CD8-positive, alpha-beta memory T cell (primary cell): ENCODE measurements at regions of chr19 and their contacts with region 1.

Region 1: GRCh38 chr19:38667661-38668171 is 20.3 kb downstream of the ACTN4 start:
- DNase-seq: no peak
- H3K4me3 ChIP-seq: no peak overlapping the region
- H3K4me3 Mint-ChIP-seq: peak overlapping the region in 3 of 7 donors; percentile 29 to 90 (median 87)
- H3K27ac ChIP-seq: no peak overlapping the region
- H3K27ac Mint-ChIP-seq: peak overlapping the region in 7 of 8 donors; percentile 27 to 97 (median 80)
- H3K4me1 ChIP-seq: peaks cover 82% of the 10 kb centered on the region
- H3K4me1 Mint-ChIP-seq: peaks cover 83 to 92% (median 86%) of the 10 kb centered on the region in 3 donors
- H3K27me3 ChIP-seq: no peaks in the 10 kb centered on the region
- H3K27me3 Mint-ChIP-seq: no peaks in the 10 kb centered on the region

Region 2: DNA sequence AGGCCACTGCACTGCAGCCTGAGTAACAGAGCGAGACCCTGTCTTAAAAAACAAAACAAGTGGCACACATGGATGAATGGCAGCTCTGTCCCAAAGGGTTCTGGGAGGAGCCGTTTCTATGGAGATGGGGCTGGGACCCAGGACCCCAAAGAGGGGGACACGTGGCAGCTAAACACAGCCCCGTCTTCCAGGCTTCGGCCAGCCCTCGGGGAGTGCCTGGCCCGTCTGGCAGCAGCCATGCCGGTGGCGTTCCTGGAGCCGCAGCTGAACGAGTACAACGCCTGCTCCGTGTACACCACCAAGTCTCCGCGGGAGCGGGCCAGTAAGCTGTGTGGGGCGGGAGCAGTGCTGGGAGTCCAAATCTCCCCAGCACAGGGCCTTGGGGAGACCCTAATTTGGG is 151.8 kb before region 1 on chr19:
- CTCF ChIA-PET with region 1: no interaction called
- POLR2A ChIA-PET with region 1: no interaction called
- DNase-seq: no peak
- H3K4me3 ChIP-seq: no peak overlapping the region
- H3K4me3 Mint-ChIP-seq: no peak overlapping the region
- H3K27ac ChIP-seq: no peak overlapping the region
- H3K27ac Mint-ChIP-seq: no peak overlapping the region
- H3K4me1 ChIP-seq: peaks cover 5% of the 10 kb centered on the region
- H3K4me1 Mint-ChIP-seq: peaks cover 8 to 20% (median 18%) of the 10 kb centered on the region in 3 donors
- H3K27me3 ChIP-seq: no peaks in the 10 kb centered on the region
- H3K27me3 Mint-ChIP-seq: peaks cover 0 to 3% of the 10 kb centered on the region in 2 donors

Region 3: DNA sequence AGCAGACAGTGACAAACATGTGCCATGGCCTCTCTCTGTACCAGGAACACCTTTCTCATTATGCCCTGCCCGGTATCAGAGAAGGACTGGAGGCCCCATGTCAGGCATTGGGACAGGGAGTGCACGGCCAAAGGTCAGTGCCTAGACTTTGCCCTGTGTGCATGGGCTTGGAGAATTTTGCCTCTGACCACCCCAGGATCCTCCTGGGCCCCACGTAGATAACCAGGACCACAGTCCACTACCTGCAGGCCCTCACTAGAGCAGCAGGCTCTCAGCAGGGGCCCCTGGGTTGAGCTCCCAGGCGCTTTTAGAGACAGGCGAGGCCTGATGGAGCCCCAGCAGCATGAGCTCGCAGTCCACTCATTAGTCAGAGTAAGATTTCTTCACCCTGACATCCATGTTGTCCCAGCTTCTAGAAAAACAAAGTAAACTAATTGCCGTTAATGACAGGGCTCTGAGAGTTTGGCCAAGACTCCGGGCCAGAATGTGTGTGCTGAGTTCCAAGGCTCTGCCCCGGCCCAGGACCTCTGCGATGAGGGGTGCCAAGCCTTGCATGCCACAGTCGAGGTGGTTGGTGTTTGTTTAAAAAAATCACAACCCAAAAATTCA is 33.8 kb after region 1 on chr19:
- CTCF ChIA-PET with region 1: no interaction called
- POLR2A ChIA-PET with region 1: interaction called, 12 read pairs
- DNase-seq: no peak
- H3K4me3 ChIP-seq: no peak overlapping the region
- H3K4me3 Mint-ChIP-seq: no peak overlapping the region
- H3K27ac ChIP-seq: no peak overlapping the region
- H3K27ac Mint-ChIP-seq: no peak overlapping the region
- H3K4me1 ChIP-seq: peaks cover 5% of the 10 kb centered on the region
- H3K4me1 Mint-ChIP-seq: peaks cover 15 to 24% (median 23%) of the 10 kb centered on the region in 3 donors
- H3K27me3 ChIP-seq: no peaks in the 10 kb centered on the region
- H3K27me3 Mint-ChIP-seq: peaks cover 0 to 2% of the 10 kb centered on the region in 2 donors

Region 4: GRCh38 chr19:38711726-38712153 is 44.0 kb after region 1 on chr19:
- CTCF ChIA-PET with region 1: no interaction called
- POLR2A ChIA-PET with region 1: no interaction called
- DNase-seq: no peak
- H3K4me3 ChIP-seq: no peak overlapping the region
- H3K4me3 Mint-ChIP-seq: no peak overlapping the region
- H3K27ac ChIP-seq: no peak overlapping the region
- H3K27ac Mint-ChIP-seq: no peak overlapping the region
- H3K4me1 ChIP-seq: no peaks in the 10 kb centered on the region
- H3K4me1 Mint-ChIP-seq: no peaks in the 10 kb centered on the region
- H3K27me3 ChIP-seq: no peaks in the 10 kb centered on the region
- H3K27me3 Mint-ChIP-seq: peaks cover 0 to 3% of the 10 kb centered on the region in 2 donors

Region 5: GRCh38 chr19:38815059-38816001 is 147.6 kb after region 1 on chr19:
- CTCF ChIA-PET with region 1: no interaction called
- POLR2A ChIA-PET with region 1: no interaction called
- DNase-seq: no peak
- H3K4me3 ChIP-seq: no peak overlapping the region
- H3K4me3 Mint-ChIP-seq: no peak overlapping the region
- H3K27ac ChIP-seq: no peak overlapping the region
- H3K27ac Mint-ChIP-seq: no peak overlapping the region
- H3K4me1 ChIP-seq: no peaks in the 10 kb centered on the region
- H3K4me1 Mint-ChIP-seq: peaks cover 0 to 6% (median under 1%) of the 10 kb centered on the region in 3 donors
- H3K27me3 ChIP-seq: no peaks in the 10 kb centered on the region
- H3K27me3 Mint-ChIP-seq: no peaks in the 10 kb centered on the region